ENCODE measurements at regions of chr20 and their contacts with region 1.

Region 1: DNA sequence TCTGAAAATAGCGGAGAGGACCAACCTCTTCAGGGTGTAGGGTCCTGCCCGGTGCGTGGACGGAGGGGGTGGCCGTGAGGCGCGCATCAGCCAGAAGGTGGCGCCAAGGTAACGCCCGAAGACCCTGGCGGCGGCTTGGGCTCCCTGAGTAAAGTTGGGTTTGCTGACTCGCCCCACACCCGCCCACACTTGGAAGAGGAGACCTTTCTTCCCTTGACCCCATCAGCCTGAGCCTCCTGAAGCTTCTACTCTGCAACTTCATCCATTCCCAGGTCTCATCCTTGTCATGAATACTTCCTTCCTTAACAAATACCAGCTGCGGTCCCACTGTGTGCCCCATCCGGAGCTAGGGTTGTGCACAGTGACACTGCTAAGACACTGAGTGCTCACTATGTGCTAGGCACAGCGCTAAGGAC is 14.6 kb downstream of the CD40 start:
- DNase-seq: peak; percentile 81 to 90
- H3K4me3 ChIP-seq: no peak overlapping the region
- H3K4me3 Mint-ChIP-seq: no peak overlapping the region
- H3K27ac Mint-ChIP-seq: no peak overlapping the region
- H3K4me1 ChIP-seq: no peaks in the 10 kb centered on the region
- H3K4me1 Mint-ChIP-seq: no peaks in the 10 kb centered on the region
- H3K27me3 ChIP-seq: peaks cover 7% of the 10 kb centered on the region
- H3K27me3 Mint-ChIP-seq: peaks cover 36% of the 10 kb centered on the region
- CTCF ChIP-seq: peak; percentile 99

Region 2: DNA sequence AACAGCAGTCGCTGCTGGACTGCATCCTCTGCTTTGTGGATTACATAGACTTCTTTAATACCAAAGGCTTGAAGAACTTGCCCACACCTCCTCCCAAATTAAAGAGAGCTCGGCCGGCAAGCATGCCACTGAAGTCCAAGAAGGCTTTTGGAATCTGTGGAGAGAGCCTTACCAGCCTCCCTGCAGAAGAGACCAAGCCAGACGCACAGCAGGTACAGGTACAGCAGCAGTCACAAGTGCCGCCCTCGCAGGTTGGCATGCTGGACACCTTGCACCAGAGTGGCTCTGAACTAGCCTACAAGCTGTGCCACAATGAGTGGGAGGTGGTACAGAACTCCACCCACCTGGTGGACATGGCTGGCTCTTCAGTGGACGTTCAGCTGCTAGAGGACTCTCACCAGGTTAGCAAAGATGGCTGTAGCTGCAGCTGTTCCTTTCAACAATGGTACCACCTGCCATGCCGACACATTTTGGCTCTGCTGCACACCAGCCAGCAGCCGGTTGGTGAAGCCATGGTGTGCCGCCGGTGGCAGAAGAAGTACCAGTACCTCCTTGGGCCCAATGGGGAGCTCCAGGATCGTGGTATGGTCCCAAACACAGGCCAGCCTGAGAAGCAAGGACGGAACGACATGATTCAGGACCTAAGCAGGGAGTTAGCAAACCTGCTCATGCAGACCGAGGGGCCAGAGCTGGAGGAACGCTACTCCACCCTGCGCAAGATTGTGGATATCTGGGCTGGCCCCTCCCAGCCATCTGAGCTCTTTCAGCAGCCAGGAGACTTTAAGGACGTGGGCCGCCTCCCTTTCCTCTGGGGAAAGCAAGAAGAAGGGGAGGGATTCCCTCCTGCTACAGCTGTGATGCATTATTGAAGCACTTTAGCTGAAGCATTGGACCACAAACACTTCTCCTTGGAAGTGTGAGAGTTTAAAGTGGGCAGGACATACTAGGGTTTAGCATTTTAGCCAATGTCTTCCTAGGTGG is 254.6 kb before region 1 on chr20:
- CTCF ChIA-PET with region 1: no interaction called
- POLR2A ChIA-PET with region 1: no interaction called
- intact Hi-C with region 1: no loop called
- DNase-seq: no peak
- H3K4me3 ChIP-seq: no peak overlapping the region
- H3K4me3 Mint-ChIP-seq: no peak overlapping the region
- H3K27ac Mint-ChIP-seq: no peak overlapping the region
- H3K4me1 ChIP-seq: no peaks in the 10 kb centered on the region
- H3K4me1 Mint-ChIP-seq: peaks cover 19% of the 10 kb centered on the region
- H3K27me3 ChIP-seq: no peaks in the 10 kb centered on the region
- H3K27me3 Mint-ChIP-seq: no peaks in the 10 kb centered on the region
- CTCF ChIP-seq: no peak

Region 3: GRCh38 chr20:46022411-46023147 is 110.1 kb before region 1 on chr20:
- CTCF ChIA-PET with region 1: no interaction called
- POLR2A ChIA-PET with region 1: interaction called, 3 read pairs
- intact Hi-C with region 1: loop called (anchors 5 kb)
- DNase-seq: peak; percentile 69 to 80
- H3K4me3 ChIP-seq: peak overlapping the region; percentile 43
- H3K4me3 Mint-ChIP-seq: peak overlapping the region; percentile 56
- H3K27ac Mint-ChIP-seq: no peak overlapping the region
- H3K4me1 ChIP-seq: no peaks in the 10 kb centered on the region
- H3K4me1 Mint-ChIP-seq: no peaks in the 10 kb centered on the region
- H3K27me3 ChIP-seq: peaks cover under 1% of the 10 kb centered on the region; the same call in 1 of the 2 replicates
- H3K27me3 Mint-ChIP-seq: peaks cover 28% of the 10 kb centered on the region
- CTCF ChIP-seq: peak; percentile 87 to 97

Region 4: DNA sequence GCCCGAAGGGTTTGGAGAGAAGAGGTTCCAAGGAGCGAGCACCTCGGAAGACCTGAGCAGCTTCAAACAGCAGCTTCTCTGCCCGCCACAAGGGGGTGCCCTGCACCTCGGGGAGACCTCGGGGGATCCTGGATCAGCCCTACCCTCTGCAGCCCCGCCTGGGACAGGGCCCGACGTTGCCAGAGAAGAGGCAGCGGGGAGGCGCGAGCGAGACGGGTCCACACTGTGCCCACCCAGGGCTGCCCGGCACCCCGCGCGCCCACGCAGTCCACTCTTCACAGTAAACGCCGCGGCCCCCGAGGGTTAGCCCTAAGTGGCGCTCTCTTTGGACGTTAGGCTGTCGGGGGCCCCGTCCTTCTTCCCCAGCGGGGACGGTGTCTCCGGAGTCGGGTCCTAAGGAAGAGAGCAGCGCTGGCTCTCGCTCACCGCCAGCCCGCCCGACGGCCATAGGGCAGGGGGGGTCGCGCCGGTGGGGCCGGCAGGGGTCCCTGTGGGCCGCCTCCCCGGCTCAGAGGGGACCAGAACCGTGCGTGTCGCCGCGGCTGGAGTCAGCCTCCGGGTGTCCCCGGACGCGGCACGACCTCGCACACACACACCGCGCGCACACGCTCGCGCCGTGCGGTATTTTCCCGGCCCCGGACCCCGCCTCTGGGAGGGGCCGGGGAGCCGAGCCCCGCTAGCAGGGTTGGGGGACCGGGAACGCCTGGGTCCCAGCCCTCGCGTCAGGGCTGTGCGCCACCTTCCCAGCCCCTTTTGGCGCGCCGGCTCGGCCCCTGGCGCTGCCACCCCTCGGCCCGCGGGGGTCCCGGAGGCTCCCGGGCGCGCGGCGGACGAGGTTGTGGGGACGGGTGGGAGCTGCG is 174.7 kb after region 1 on chr20:
- CTCF ChIA-PET with region 1: interaction called, 4 read pairs
- POLR2A ChIA-PET with region 1: no interaction called
- intact Hi-C with region 1: loop called (anchors 5 kb)
- DNase-seq: peak; percentile 76 to 85
- H3K4me3 ChIP-seq: peak overlapping the region; percentile 46
- H3K4me3 Mint-ChIP-seq: peak overlapping the region; percentile 45
- H3K27ac Mint-ChIP-seq: no peak overlapping the region
- H3K4me1 ChIP-seq: peaks cover 15% of the 10 kb centered on the region
- H3K4me1 Mint-ChIP-seq: peaks cover 15% of the 10 kb centered on the region
- H3K27me3 ChIP-seq: peaks cover 22% of the 10 kb centered on the region
- H3K27me3 Mint-ChIP-seq: peaks cover 50% of the 10 kb centered on the region
- CTCF ChIP-seq: peak; percentile 97 to 99

Region 5: DNA sequence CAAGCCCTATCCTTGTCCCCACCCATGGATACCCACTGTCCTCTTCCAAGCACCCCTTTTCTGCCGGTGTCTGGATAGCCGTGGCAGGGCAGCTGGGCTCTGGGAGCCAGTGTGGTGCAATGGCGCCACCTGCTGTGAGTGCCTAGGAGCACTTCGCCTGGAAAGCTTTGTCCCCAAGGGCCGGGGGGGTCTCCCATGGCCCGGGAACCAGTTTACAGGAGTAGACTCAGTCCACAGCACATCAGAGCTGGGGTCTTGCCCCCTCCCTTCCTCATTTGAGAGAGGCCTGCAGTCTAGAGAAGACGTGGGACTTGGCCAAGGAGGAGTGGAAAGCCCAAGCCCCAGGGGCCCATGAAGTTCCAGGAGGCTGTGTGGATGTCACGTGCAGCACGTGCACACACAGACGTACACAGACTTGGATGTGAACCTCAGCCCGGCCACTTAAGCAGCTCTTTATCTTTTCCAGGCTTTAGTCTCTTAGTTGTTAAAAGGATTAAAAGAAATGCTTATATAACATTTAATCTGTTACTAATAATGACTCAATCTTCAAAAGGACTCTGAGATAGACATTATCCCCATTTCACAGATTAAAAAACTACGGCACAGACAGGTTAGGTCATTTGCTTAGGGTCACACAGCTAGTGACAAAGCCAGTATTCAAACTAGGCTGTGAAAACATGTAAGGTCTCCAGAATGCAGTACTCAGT is 216.5 kb after region 1 on chr20:
- CTCF ChIA-PET with region 1: interaction called, 7 read pairs
- POLR2A ChIA-PET with region 1: no interaction called
- intact Hi-C with region 1: loop called (anchors 1 kb)
- DNase-seq: peak in 1 of 2 experiments; percentile 81
- H3K4me3 ChIP-seq: no peak overlapping the region
- H3K4me3 Mint-ChIP-seq: no peak overlapping the region
- H3K27ac Mint-ChIP-seq: no peak overlapping the region
- H3K4me1 ChIP-seq: peaks cover 17% of the 10 kb centered on the region
- H3K4me1 Mint-ChIP-seq: peaks cover 25% of the 10 kb centered on the region
- H3K27me3 ChIP-seq: no peaks in the 10 kb centered on the region; the same call in 1 of the 2 replicates
- H3K27me3 Mint-ChIP-seq: peaks cover 6% of the 10 kb centered on the region
- CTCF ChIP-seq: peak; percentile 91 to 92

Region 6: DNA sequence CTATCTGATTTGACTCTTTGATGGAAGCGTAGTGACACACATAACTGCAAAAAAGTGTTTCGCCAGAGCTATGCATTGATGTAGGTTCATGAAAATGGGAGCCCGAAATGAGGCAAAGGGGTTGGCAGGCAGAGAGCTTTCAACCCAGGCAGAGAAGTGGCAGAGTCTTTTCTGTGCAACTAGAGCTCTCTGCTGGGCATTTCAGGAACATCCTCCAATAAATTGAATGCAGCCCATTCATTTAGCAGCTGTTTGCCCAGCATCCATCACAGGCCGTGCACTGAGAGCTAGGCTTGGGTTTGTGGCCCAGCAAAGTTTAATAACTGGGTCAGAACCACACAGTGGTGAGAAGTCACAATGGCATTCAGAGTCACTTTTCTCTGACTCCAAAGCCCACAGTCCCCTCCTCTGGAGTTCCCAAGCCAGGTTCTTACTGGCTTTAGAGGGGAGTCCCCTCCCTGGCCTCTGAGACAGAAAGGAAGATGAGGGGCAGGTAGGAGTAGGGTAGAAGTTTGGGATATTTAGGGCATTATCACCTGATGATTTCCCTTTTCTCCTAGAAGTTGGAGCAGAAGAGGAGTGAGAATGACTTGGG is 305.5 kb after region 1 on chr20:
- CTCF ChIA-PET with region 1: interaction called, 13 read pairs
- POLR2A ChIA-PET with region 1: no interaction called
- intact Hi-C with region 1: loop called (anchors 1 kb)
- DNase-seq: peak in 1 of 2 experiments; percentile 60
- H3K4me3 ChIP-seq: no peak overlapping the region
- H3K4me3 Mint-ChIP-seq: no peak overlapping the region
- H3K27ac Mint-ChIP-seq: no peak overlapping the region
- H3K4me1 ChIP-seq: no peaks in the 10 kb centered on the region
- H3K4me1 Mint-ChIP-seq: no peaks in the 10 kb centered on the region
- H3K27me3 ChIP-seq: no peaks in the 10 kb centered on the region; the same call in 1 of the 2 replicates
- H3K27me3 Mint-ChIP-seq: peaks cover 15% of the 10 kb centered on the region
- CTCF ChIP-seq: peak; percentile 32 to 61

Region 7: GRCh38 chr20:46681032-46681854 is 548.5 kb after region 1 on chr20:
- CTCF ChIA-PET with region 1: no interaction called
- POLR2A ChIA-PET with region 1: no interaction called
- intact Hi-C with region 1: loop called (anchors 2 kb)
- DNase-seq: peak; percentile 82 to 88
- H3K4me3 ChIP-seq: no peak overlapping the region
- H3K4me3 Mint-ChIP-seq: no peak overlapping the region
- H3K27ac Mint-ChIP-seq: no peak overlapping the region
- H3K4me1 ChIP-seq: no peaks in the 10 kb centered on the region
- H3K4me1 Mint-ChIP-seq: peaks cover 10% of the 10 kb centered on the region
- H3K27me3 ChIP-seq: no peaks in the 10 kb centered on the region
- H3K27me3 Mint-ChIP-seq: no peaks in the 10 kb centered on the region
- CTCF ChIP-seq: peak; percentile 94 to 98

Measured in Caco-2 (cell line).